ENCODE measurements at regions of chr1 and their contacts with region 1.

Region 1: GRCh38 chr1:179816196-179816960 is 61.2 kb downstream of the TOR1AIP2 start:
- DNase-seq: no peak
- H3K4me3 ChIP-seq: no peak overlapping the region
- H3K27ac ChIP-seq: no peak overlapping the region
- H3K27me3 ChIP-seq: peaks cover 28% of the 10 kb centered on the region
- CTCF ChIP-seq: no peak

Region 2: DNA sequence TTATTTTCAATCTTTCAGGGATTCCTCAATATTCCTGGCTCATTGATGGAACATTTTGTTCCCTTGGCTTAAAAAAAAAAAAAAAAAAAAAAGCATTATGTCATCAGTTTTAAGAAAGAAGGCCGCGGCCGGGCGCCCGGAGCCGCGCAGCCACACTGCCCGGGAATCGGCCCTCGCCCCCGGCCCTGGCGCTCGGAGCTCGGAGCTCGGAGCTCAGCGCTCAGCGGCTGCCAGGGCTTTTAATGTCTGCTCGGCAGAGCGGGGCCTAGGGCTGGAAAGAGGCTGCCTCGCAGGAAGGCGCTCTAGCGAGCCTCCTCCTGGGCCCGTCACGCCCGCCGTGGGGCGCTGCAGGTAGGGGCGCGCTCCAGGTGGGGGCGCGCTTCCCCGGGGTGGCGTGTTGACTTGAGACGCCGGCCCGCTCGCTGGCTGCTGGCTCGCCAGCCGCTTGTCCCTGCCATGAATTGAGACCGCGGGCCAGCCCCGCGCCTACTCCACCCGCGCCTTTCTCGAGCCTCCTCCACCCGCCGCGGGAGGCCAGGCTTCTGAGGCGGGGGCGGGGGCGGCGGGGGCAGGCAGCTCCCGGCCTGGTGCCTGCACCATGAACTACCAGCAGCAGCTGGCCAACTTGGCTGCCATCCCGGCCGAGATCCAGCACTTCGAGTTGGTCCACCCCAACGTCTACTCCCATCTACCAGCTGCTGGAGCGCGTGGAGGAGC is 230.1 kb before region 1 on chr1:
- CTCF ChIA-PET with region 1: interaction called, 10 read pairs
- POLR2A ChIA-PET with region 1: no interaction called
- DNase-seq: no peak
- H3K4me3 ChIP-seq: peak overlapping the region; percentile 32; the same call in 1 of the 2 replicates
- H3K27ac ChIP-seq: no peak overlapping the region
- H3K27me3 ChIP-seq: peaks cover 17% of the 10 kb centered on the region
- CTCF ChIP-seq: peak; percentile 34

Region 3: GRCh38 chr1:179831852-179832699 is 15.7 kb after region 1 on chr1:
- CTCF ChIA-PET with region 1: interaction called, 97 read pairs
- POLR2A ChIA-PET with region 1: no interaction called
- DNase-seq: no peak
- H3K4me3 ChIP-seq: no peak overlapping the region
- H3K27ac ChIP-seq: no peak overlapping the region
- H3K27me3 ChIP-seq: peaks cover 12% of the 10 kb centered on the region
- CTCF ChIP-seq: no peak

Region 4: GRCh38 chr1:179966551-179966950 is 150.2 kb after region 1 on chr1:
- CTCF ChIA-PET with region 1: no interaction called
- POLR2A ChIA-PET with region 1: no interaction called
- DNase-seq: no peak
- H3K4me3 ChIP-seq: no peak overlapping the region
- H3K27ac ChIP-seq: no peak overlapping the region
- H3K27me3 ChIP-seq: no peaks in the 10 kb centered on the region
- CTCF ChIP-seq: no peak

Region 5: GRCh38 chr1:180623579-180624347 is 807.4 kb after region 1 on chr1:
- CTCF ChIA-PET with region 1: no interaction called
- POLR2A ChIA-PET with region 1: no interaction called
- DNase-seq: no peak
- H3K4me3 ChIP-seq: no peak overlapping the region
- H3K27ac ChIP-seq: no peak overlapping the region
- H3K27me3 ChIP-seq: no peaks in the 10 kb centered on the region
- CTCF ChIP-seq: peak; percentile 53

Measured in AG04450 (cell line).